ENCODE measurements at regions of chr12 and their contacts with region 1.

Region 1: DNA sequence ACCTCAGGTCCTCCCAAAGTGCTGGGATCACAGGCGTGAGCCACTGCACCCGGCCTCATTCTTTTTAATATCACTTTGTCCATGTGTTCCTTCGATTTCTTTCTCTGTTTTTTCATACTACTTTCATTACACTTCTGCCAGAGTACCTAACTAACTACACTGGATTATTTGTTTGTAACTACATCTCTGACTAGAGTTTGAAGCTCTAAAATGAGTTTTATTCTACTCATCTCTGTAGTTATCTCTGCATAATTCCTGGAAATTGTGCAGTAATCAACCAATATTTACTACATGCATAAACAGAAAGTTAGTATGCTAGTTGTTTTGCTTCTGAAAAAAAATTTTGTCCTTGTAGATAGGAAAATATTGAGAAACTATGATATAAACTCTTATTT is 15.2 kb downstream of the KLRK1 start:
- DNase-seq: no peak
- ATAC-seq: no peak
- H3K4me3 Mint-ChIP-seq: peak overlapping the region; percentile 79
- H3K27ac Mint-ChIP-seq: peak overlapping the region; percentile 83
- H3K4me1 Mint-ChIP-seq: peaks cover 60% of the 10 kb centered on the region
- H3K27me3 Mint-ChIP-seq: no peaks in the 10 kb centered on the region

Region 2: DNA sequence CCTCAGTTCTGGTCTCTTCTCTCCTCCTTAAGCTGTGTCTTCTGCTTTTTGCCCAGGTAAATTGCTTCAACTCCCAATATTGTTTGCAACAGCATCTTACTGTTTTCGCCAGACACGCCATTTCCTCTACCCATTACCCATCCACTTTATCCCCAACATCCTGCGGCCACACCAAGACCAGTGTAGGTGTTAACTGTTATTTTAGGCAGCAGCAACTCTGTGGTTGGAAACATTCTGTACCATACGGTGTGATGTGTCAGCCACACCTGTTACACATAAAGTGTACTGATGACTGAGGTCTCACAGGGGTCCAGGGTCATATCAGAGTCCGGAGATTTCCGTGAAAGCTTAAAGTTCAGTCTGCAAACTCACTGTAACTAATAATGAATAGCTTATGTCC is 88.7 kb before region 1 on chr12:
- POLR2A ChIA-PET with region 1: no interaction called
- DNase-seq: no peak
- ATAC-seq: peak; percentile 78
- H3K4me3 Mint-ChIP-seq: peak overlapping the region; percentile 47
- H3K27ac Mint-ChIP-seq: peak overlapping the region; percentile 58
- H3K4me1 Mint-ChIP-seq: peaks cover 24% of the 10 kb centered on the region
- H3K27me3 Mint-ChIP-seq: no peaks in the 10 kb centered on the region

Region 3: GRCh38 chr12:10385166-10385613 is 10.6 kb after region 1 on chr12:
- POLR2A ChIA-PET with region 1: interaction called, 10 read pairs
- DNase-seq: no peak
- ATAC-seq: peak; percentile 43
- H3K4me3 Mint-ChIP-seq: peak overlapping the region; percentile 84
- H3K27ac Mint-ChIP-seq: peak overlapping the region; percentile 88
- H3K4me1 Mint-ChIP-seq: peaks cover 61% of the 10 kb centered on the region
- H3K27me3 Mint-ChIP-seq: no peaks in the 10 kb centered on the region

Measured in activated naive CD8-positive, alpha-beta T cell treated with anti-CD3 and anti-CD28 coated beads, Interleukin-2, amount 10 ng/mL, durations not matched to agents 7 days and 5 days (primary cell).